ENCODE measurements at regions of chr2 and their contacts with region 1.

Region 1: GRCh38 chr2:101518578-101519492 is 43.9 kb upstream of the RFX8 start:
- DNase-seq: peak; percentile 69
- H3K4me3 Mint-ChIP-seq: peak overlapping the region; percentile 35
- H3K27ac Mint-ChIP-seq: peak overlapping the region; percentile 89
- H3K4me1 Mint-ChIP-seq: peaks cover 53% of the 10 kb centered on the region
- H3K27me3 Mint-ChIP-seq: no peaks in the 10 kb centered on the region
- CTCF ChIP-seq: peak; percentile 29

Region 2: DNA sequence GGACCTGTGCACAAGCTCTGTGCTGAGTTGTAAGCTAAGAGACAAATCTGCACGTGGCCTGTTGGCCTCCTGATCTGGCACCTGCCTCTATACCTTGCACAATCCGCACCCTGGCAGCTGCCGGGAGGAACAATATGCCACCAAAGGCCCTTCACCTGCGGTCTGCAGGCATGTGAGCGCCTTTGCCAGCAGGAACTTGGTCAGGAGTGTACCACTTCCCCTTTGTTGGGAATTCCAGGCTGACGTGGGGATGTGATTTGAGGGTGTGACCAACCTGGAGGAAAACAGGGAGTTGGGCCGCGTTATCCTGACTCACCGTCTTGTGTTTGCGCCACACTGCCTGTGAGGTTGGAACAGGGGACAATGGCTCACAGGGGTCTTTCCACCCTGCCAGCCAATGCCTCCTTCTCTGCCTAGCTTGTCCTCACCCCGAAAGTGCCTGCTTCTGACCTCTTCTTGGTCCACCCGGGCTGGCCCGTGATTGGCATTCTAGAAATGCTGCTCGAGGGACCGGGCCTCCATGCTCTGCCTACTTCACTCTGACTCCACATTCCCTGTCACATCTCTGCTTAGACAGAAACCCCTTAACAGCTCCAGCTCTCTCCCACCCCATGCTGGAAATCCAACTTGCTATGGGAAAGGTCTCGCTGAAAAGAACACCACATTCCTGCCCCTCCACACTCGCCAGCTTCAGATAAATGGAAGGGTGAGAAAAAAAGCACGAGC is 111.6 kb after region 1 on chr2:
- CTCF ChIA-PET with region 1: no interaction called
- intact Hi-C with region 1: loop called (anchors 2 kb)
- DNase-seq: peak; percentile 90
- H3K4me3 Mint-ChIP-seq: peak overlapping the region; percentile 13
- H3K27ac Mint-ChIP-seq: peak overlapping the region; percentile 82
- H3K4me1 Mint-ChIP-seq: peaks cover 29% of the 10 kb centered on the region
- H3K27me3 Mint-ChIP-seq: no peaks in the 10 kb centered on the region
- CTCF ChIP-seq: no peak

Region 3: GRCh38 chr2:101710471-101711318 is 191.9 kb after region 1 on chr2:
- CTCF ChIA-PET with region 1: no interaction called
- intact Hi-C with region 1: loop called (anchors 5 kb)
- DNase-seq: no peak
- H3K4me3 Mint-ChIP-seq: peak overlapping the region; percentile 32
- H3K27ac Mint-ChIP-seq: peak overlapping the region; percentile 50
- H3K4me1 Mint-ChIP-seq: peaks cover 53% of the 10 kb centered on the region
- H3K27me3 Mint-ChIP-seq: no peaks in the 10 kb centered on the region
- CTCF ChIP-seq: no peak

Region 4: DNA sequence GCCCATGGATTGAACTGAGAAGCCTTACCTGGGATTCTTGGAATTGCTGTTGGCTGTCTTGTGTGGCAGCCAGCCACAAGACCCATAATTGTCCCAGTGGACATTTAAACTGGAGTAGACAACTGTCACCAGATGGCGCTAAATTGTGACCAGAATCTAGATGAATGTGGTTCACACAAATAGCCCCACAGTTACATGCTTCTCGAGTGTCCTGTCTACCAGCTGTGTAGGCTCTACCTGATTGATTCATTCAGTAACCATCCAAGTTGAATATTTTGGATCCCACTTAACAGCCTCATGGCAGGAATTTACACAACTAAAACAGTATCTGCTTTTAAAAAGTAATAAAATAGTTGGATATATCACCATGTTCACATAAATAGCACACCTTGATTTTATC is 251.9 kb after region 1 on chr2:
- CTCF ChIA-PET with region 1: interaction called, 4 read pairs
- intact Hi-C with region 1: loop called (anchors 2 kb)
- DNase-seq: peak; percentile 51
- H3K4me3 Mint-ChIP-seq: no peak overlapping the region
- H3K27ac Mint-ChIP-seq: peak overlapping the region; percentile 61
- H3K4me1 Mint-ChIP-seq: peaks cover 58% of the 10 kb centered on the region
- H3K27me3 Mint-ChIP-seq: no peaks in the 10 kb centered on the region
- CTCF ChIP-seq: no peak